PC-3 (cell line): ENCODE measurements at regions of chrX and their contacts with region 1.

Region 1: DNA sequence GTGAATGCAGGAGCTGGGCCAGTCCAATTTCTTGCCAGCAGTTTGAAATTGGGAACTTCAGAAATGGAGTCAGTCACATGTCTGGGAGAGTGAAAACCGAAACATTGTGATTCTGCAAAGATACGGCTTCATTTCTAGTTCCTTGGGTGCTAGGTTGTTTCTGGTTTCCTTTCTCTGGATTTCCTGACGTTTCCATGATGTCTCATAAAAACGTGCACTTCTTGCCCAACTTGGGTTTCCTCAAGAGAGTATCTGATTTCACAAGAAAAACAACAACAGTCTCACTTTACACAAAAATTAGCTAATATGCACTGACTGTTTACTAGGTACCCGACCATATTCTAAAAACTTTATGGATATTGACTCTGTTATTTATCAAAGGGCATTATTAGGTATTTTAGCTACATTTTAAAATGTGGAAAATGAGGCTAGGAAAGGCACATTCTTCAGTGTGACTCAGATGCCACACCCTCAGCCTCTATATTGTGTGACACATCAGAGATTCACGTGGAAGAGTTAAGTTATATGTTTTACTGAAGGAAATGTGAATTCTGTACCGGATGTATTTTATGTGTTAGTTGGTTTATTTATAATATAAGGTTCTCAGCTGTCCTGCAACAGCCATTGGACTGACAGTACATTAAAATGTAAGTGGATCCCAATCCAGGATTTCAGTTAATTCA is 225.0 kb upstream of the PUDP start:
- DNase-seq: peak; percentile 79
- ATAC-seq: peak; percentile 89
- H3K4me3 ChIP-seq: no peak overlapping the region
- H3K27ac ChIP-seq: peak overlapping the region; percentile 70
- H3K4me1 ChIP-seq: peaks cover 17% of the 10 kb centered on the region
- H3K27me3 ChIP-seq: no peaks in the 10 kb centered on the region
- CTCF ChIP-seq: no peak

Region 2: GRCh38 chrX:6666666-6667407 is 706.1 kb before region 1 on chrX:
- CTCF ChIA-PET with region 1: no interaction called
- POLR2A ChIA-PET with region 1: no interaction called
- intact Hi-C with region 1: no loop called
- DNase-seq: no peak
- ATAC-seq: no peak
- H3K4me3 ChIP-seq: no peak overlapping the region
- H3K27ac ChIP-seq: no peak overlapping the region
- H3K4me1 ChIP-seq: no peaks in the 10 kb centered on the region
- H3K27me3 ChIP-seq: no peaks in the 10 kb centered on the region
- CTCF ChIP-seq: no peak

Region 3: GRCh38 chrX:7147978-7148824 is 224.8 kb before region 1 on chrX and contains the start of gene PUDP:
- CTCF ChIA-PET with region 1: no interaction called
- POLR2A ChIA-PET with region 1: no interaction called
- intact Hi-C with region 1: loop called (anchors 5 kb)
- DNase-seq: peak; percentile 84
- ATAC-seq: peak; percentile 78
- H3K4me3 ChIP-seq: peak within 1 kb of the TSS; percentile 96
- H3K27ac ChIP-seq: peak within 1 kb of the TSS; percentile 68
- H3K4me1 ChIP-seq: peaks cover 30% of the 10 kb centered on the region
- H3K27me3 ChIP-seq: no peaks in the 10 kb centered on the region
- CTCF ChIP-seq: peak; percentile 26; the same call in 1 of the 2 replicates
- total RNA-seq, gene PUDP: 7.6 and 7.8 TPM in 2 replicates

Region 4: GRCh38 chrX:7264399-7264798 is 108.6 kb before region 1 on chrX:
- CTCF ChIA-PET with region 1: no interaction called
- POLR2A ChIA-PET with region 1: no interaction called
- intact Hi-C with region 1: no loop called
- DNase-seq: no peak
- ATAC-seq: peak; percentile 37
- H3K4me3 ChIP-seq: no peak overlapping the region
- H3K27ac ChIP-seq: no peak overlapping the region
- H3K4me1 ChIP-seq: peaks cover 13% of the 10 kb centered on the region; the same call in 1 of the 2 replicates
- H3K27me3 ChIP-seq: no peaks in the 10 kb centered on the region
- CTCF ChIP-seq: no peak